HAP-1 (cell line): ENCODE measurements at regions of chr22 and their contacts with region 1.

Region 1: DNA sequence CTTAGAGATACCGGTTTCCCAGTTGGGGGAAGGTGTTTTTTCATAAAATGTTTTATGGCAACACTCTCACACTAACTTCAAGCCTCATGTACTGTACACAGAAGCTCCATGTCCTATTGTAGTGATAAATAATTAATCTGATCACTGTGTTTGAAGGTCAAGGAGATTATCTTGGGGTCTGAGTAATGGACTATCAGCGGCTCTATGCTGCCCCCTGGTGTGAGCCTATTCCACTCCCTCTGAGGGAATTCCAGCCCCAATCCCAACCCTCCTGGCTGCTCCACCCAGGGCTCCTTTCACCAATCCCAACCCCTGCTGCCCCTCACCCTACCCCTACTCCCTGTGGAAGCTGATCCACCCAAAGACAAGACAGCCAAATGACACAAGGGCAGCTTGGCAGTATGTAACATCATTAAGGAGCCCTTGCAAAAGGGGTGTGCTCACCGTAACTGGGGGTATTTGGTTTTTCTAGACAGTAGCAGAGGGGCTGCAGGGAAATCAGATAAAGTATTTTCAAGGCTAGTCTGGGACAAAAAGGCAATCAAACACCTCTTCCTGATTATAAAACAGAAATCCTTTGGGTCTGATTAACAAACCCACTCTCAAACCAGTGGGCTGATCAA is 22.3 kb downstream of the HPS4 start:
- DNase-seq: peak; percentile 78 to 93
- H3K4me3 ChIP-seq: no peak overlapping the region
- H3K4me1 ChIP-seq: peaks cover 5% of the 10 kb centered on the region
- H3K27me3 ChIP-seq: no peaks in the 10 kb centered on the region

Region 2: GRCh38 chr22:26364066-26365015 is 97.0 kb before region 1 on chr22:
- in situ Hi-C with region 1: loop called (anchors 5 kb)
- DNase-seq: peak; percentile 79 to 81
- H3K4me3 ChIP-seq: no peak overlapping the region
- H3K4me1 ChIP-seq: peaks cover 5% of the 10 kb centered on the region; the same call in 1 of the 2 replicates
- H3K27me3 ChIP-seq: peaks cover 7% of the 10 kb centered on the region

Region 3: DNA sequence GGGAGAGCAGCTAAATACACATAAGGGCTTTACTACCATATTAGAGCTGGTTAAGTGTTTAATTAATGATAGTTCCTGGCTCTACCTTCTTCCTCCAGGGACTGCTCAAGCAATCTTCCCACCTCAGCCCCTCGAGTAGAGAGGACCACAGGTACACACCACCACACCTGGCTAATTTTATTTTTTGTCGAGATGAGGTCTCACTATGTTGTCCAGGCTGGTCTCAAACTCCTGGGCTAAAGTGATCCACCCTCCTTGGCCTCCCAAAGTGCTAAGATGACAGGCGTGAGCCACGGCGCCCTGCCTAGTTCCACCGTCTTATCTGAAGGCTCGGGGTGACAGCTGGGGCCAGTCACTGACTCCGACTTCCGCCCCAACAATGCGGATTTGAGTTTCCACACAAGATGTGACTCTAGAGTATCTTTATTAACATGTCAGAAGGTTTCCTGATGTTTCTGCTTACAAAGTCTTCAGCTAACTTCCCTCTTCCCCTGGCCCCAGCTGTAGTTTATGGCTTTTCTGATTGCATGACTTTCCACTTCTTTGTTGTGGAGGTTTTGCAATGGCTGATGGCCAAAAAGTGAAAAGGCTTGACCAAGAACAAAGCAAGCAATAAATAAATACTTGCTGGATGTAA is 111.8 kb after region 1 on chr22:
- in situ Hi-C with region 1: no loop called
- DNase-seq: no peak
- H3K4me3 ChIP-seq: no peak overlapping the region
- H3K4me1 ChIP-seq: peaks cover 9% of the 10 kb centered on the region
- H3K27me3 ChIP-seq: no peaks in the 10 kb centered on the region